Activated CD8-positive, alpha-beta T cell treated with anti-CD3 and anti-CD28 coated beads for 36 hours (primary cell): ENCODE measurements at regions of chr10 and their contacts with region 1.

Region 1: DNA sequence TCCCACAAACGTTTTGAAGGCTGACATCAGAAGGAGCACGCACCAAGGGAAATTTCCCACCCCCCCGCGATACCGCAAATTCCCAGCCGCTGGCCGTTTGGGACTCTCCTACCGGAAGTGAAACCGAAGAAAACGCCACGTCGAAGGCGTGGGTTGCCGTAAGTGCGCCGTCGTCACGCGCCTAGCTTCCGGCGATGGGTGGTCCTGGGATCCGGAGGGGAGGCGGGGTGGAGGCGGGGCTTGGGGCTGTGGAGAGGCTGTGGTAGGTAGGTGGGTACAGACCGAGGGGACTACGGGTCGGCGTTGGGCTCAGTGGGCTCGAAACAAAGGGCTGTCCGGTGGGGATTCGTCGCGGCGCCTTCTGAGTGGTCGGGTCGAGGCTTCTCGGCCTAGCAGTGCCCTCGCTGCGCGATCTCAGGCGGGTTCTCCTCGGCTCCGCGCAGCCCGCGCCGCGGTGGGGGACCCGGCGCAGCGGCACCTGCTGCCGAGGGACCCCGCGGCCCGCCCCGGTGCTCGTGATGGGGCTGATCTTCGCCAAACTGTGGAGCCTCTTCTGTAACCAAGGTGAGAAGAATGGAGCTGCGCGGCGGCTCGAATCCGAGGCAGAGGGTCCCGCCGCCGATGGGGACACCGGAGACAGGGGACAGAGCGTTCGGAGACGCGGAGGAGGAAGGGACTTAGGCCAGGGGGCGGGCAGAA is at the start of gene ARL5B:
- DNase-seq: peak; percentile 99
- ATAC-seq: peak; percentile 98
- H3K4me3 Mint-ChIP-seq: peak within 1 kb of the TSS; percentile 97
- H3K27ac Mint-ChIP-seq: peak within 1 kb of the TSS; percentile 98
- H3K4me1 Mint-ChIP-seq: peaks cover 28% of the 10 kb centered on the region
- H3K27me3 Mint-ChIP-seq: no peaks in the 10 kb centered on the region
- CTCF ChIP-seq: no peak
- total RNA-seq, gene ARL5B: 12.2 to 12.7 TPM

Region 2: GRCh38 chr10:16817125-16818019 is 1841.9 kb before region 1 on chr10 and contains the start of gene RSU1:
- CTCF ChIA-PET with region 1: no interaction called
- POLR2A ChIA-PET with region 1: no interaction called
- intact Hi-C with region 1: loop called (anchors 10 kb)
- DNase-seq: peak; percentile 100
- ATAC-seq: peak; percentile 98
- H3K4me3 Mint-ChIP-seq: peak within 1 kb of the TSS; percentile 85
- H3K27ac Mint-ChIP-seq: peak within 1 kb of the TSS; percentile 92
- H3K4me1 Mint-ChIP-seq: peaks cover 26% of the 10 kb centered on the region
- H3K27me3 Mint-ChIP-seq: no peaks in the 10 kb centered on the region
- CTCF ChIP-seq: no peak
- total RNA-seq, gene RSU1: 42.4 to 47.5 TPM